HepG2 (cell line): ENCODE measurements at regions of chr7 and their contacts with region 1.

Region 1: GRCh38 chr7:70693686-70694360 is 438.1 kb upstream of the GALNT17 start:
- DNase-seq: no peak
- ATAC-seq: peak; percentile 74
- H3K4me3 ChIP-seq: peak overlapping the region in 2 of 3 experiments; percentile 41 to 64; a peak in 3 of 6 replicates
- H3K27ac ChIP-seq: no peak overlapping the region
- H3K4me1 ChIP-seq: no peaks in the 10 kb centered on the region
- H3K27me3 ChIP-seq: peaks cover 6 to 36% of the 10 kb centered on the region in 2 experiments
- CTCF ChIP-seq: no peak
- EP300 ChIP-seq: no peak
- POLR2A ChIP-seq: no peak
- RAD21 ChIP-seq: no peak

Region 2: DNA sequence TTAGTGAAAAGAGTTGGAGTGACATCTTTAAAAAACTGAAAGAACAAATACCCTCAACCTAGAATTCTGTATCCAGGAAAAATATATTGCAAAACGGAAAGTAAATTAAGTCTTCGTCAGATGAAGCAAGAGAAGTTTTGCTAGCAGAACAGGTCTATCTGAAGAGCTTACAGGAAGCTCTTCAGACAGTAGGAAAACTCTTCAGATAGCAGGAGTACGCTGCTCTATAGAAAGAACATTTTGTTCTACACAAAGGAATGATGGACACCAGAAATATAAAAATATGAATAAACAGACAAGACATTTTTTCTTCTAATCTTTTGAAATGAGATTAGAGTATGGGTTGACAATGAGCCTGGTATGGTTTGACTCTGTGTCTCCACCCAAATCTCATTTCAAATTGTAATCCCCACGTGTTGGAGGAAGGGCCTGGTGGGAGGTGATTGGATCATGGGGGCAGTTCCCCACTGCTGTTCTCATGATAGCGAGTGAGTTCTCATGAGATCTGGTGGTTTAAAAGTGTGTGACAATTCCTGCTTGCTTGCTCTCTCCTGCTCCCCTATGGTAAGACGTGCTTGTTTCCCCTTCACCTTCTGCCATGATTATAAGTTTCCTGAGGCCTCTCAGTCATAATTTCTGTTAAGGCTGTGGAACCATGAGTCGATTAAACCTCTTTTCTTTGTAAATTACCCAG is 528.2 kb before region 1 on chr7:
- CTCF ChIA-PET with region 1: no interaction called
- POLR2A ChIA-PET with region 1: no interaction called
- in situ Hi-C with region 1: no loop called
- intact Hi-C with region 1: loop called (anchors 10 kb)
- DNase-seq: no peak
- ATAC-seq: no peak
- H3K4me3 ChIP-seq: no peak overlapping the region
- H3K27ac ChIP-seq: no peak overlapping the region
- H3K4me1 ChIP-seq: no peaks in the 10 kb centered on the region
- H3K27me3 ChIP-seq: no peaks in the 10 kb centered on the region
- CTCF ChIP-seq: no peak
- EP300 ChIP-seq: no peak
- POLR2A ChIP-seq: no peak
- RAD21 ChIP-seq: no peak

Region 3: GRCh38 chr7:70193514-70193913 is 500.3 kb before region 1 on chr7:
- CTCF ChIA-PET with region 1: no interaction called
- POLR2A ChIA-PET with region 1: no interaction called
- in situ Hi-C with region 1: no loop called
- intact Hi-C with region 1: loop called (anchors 10 kb)
- DNase-seq: no peak
- ATAC-seq: no peak
- H3K4me3 ChIP-seq: no peak overlapping the region
- H3K27ac ChIP-seq: no peak overlapping the region
- H3K4me1 ChIP-seq: no peaks in the 10 kb centered on the region
- H3K27me3 ChIP-seq: no peaks in the 10 kb centered on the region
- CTCF ChIP-seq: no peak
- EP300 ChIP-seq: no peak
- POLR2A ChIP-seq: no peak
- RAD21 ChIP-seq: no peak

Region 4: DNA sequence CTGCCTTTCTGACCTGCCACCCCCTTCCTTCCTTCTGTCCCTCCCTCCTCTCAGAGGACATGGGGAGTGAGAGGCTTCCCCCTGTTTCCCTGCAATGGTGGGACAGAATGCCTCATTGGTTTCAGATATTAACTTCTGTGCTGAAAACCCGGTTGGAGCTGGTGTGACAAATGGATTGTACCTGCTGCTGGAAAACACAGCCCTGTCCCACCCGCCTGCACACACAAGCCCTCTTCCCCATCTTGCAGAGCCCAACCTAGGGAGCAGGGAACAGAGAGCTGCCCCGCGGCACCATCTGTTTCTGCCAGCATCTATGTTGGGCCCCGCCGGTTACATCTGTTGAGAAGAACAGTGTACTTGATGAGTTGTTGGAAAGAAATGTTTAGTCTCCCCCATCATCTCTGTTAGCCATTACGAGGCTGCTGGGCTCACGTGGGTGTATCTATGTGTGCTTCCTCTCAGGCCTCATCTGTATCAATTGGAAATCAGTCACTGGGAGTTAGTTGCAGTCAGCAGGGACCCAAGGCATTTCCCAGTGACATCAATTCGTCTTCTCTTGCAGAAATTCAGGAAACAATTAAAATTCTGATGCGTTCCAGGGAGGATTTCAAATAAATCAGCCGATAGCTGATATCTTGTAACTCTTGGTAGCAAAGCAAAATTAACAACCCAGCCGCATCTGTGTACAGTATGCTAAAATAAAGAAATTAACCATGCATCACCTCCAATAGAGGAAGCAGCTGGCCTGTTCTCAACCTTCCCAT is 287.5 kb before region 1 on chr7:
- CTCF ChIA-PET with region 1: no interaction called
- POLR2A ChIA-PET with region 1: no interaction called
- in situ Hi-C with region 1: no loop called
- intact Hi-C with region 1: no loop called
- DNase-seq: no peak
- ATAC-seq: no peak
- H3K4me3 ChIP-seq: no peak overlapping the region
- H3K27ac ChIP-seq: no peak overlapping the region
- H3K4me1 ChIP-seq: no peaks in the 10 kb centered on the region
- H3K27me3 ChIP-seq: no peaks in the 10 kb centered on the region
- CTCF ChIP-seq: no peak
- EP300 ChIP-seq: no peak
- POLR2A ChIP-seq: no peak
- RAD21 ChIP-seq: no peak

Region 5: GRCh38 chr7:70506434-70506833 is 187.4 kb before region 1 on chr7:
- CTCF ChIA-PET with region 1: no interaction called
- POLR2A ChIA-PET with region 1: no interaction called
- in situ Hi-C with region 1: no loop called
- intact Hi-C with region 1: loop called (anchors 1 kb)
- DNase-seq: peak; percentile 35
- ATAC-seq: peak; percentile 96
- H3K4me3 ChIP-seq: no peak overlapping the region
- H3K27ac ChIP-seq: no peak overlapping the region
- H3K4me1 ChIP-seq: no peaks in the 10 kb centered on the region
- H3K27me3 ChIP-seq: no peaks in the 10 kb centered on the region
- CTCF ChIP-seq: peak; percentile 61
- EP300 ChIP-seq: no peak
- POLR2A ChIP-seq: no peak
- RAD21 ChIP-seq: no peak